Right ventricle myocardium superior (tissue), 1 donor: ENCODE measurements at regions of chr12 and their contacts with region 1.

Region 1: GRCh38 chr12:46661110-46661845 is 164.5 kb downstream of the SLC38A4 start:
- DNase-seq: no peak
- ATAC-seq: peak; percentile 82

Region 2: DNA sequence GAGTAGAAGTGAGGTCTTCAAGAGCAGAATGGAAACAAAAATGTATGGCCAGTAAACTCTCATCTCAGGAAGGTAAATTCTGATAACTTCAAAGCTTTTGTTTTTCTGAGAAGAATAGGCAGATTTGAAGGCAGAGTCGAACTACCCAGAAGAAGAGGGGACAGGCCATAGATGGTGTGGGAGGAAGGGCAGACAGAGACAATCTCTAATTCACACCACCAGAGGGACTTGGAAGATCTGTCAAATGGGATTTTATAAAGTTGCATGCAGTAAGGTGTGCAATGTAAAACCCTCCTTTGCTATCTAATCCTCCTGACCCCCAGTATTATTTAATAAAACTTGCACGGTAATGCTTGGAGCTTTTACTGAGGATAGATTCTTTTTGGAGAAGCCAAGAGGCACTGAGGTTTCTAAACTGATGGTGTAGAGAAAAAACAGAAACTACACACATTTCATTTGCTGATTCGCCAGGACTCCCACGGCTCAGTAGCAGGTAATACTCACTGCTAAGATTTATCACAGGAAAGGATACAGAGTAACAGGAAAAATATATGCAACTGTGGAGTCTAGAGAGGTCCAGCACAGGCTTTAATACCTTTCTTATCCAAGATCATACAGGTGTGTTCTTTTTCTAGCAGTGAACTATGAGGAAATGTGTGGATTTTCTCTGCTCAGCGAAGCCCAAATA is 307.0 kb before region 1 on chr12:
- intact Hi-C with region 1: loop called (anchors 5 kb)
- DNase-seq: no peak
- ATAC-seq: no peak

Region 3: GRCh38 chr12:46372544-46373110 is 288.7 kb before region 1 on chr12 and contains the start of gene SLC38A2:
- intact Hi-C with region 1: loop called (anchors 5 kb)
- DNase-seq: peak; percentile 100
- ATAC-seq: peak; percentile 94
- total RNA-seq, gene SLC38A2: 144 TPM

Region 4: GRCh38 chr12:46573347-46573658 is 88.0 kb before region 1 on chr12:
- intact Hi-C with region 1: no loop called
- DNase-seq: no peak
- ATAC-seq: no peak

Region 5: DNA sequence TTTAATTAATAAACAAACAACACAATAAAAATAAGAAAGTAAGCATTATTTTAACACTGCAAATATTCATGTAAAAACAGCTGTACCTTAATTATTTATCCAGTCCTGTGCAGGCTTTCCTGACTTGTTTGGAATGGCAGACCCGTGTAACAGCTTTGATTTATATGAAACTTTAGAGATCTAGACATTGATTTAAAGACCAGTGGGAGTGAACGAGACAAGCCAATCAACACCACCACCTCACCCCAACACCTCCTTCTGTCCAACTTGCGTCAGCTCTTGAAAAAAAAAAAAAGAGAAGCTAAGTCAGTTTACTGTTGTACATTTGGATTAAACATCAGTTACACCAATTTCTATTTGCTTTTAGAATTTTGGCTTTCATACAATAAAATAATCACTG is 142.2 kb after region 1 on chr12:
- intact Hi-C with region 1: no loop called
- DNase-seq: no peak
- ATAC-seq: no peak